Activated CD4-positive, alpha-beta T cell treated with anti-CD3 and anti-CD28 coated beads, Interleukin-2, amount 10 ng/mL, durations not matched to agents 24 days and 14 days (primary cell): ENCODE measurements at regions of chr4 and their contacts with region 1.

Region 1: DNA sequence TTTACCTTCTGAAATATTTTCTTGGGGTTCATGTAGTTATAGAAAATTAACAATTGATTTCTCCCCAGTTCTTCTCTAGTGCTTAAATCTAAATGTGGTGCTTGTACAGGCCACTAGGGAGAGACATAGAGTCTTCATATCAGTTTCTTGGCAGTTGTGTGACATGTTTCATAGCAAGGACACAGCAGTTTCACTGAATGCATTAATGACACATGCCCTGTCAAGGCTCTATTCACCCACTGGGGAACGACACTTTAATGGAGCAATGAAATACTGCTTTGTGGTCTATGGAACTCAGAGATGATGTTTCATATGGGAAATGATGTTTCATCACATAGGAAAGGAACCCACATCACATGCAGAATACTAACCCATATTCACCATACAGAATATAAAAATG is 2.8 kb downstream of the VEGFC start:
- DNase-seq: peak; percentile 59
- H3K4me3 Mint-ChIP-seq: no peak overlapping the region
- H3K27ac Mint-ChIP-seq: no peak overlapping the region
- H3K4me1 Mint-ChIP-seq: peaks cover 3% of the 10 kb centered on the region
- H3K27me3 Mint-ChIP-seq: peaks cover 42% of the 10 kb centered on the region

Region 2: GRCh38 chr4:176377780-176378179 is 412.2 kb before region 1 on chr4:
- intact Hi-C with region 1: loop called (anchors 2 kb)
- DNase-seq: no peak
- H3K4me3 Mint-ChIP-seq: no peak overlapping the region
- H3K27ac Mint-ChIP-seq: no peak overlapping the region
- H3K4me1 Mint-ChIP-seq: no peaks in the 10 kb centered on the region
- H3K27me3 Mint-ChIP-seq: peaks cover 19% of the 10 kb centered on the region

Region 3: DNA sequence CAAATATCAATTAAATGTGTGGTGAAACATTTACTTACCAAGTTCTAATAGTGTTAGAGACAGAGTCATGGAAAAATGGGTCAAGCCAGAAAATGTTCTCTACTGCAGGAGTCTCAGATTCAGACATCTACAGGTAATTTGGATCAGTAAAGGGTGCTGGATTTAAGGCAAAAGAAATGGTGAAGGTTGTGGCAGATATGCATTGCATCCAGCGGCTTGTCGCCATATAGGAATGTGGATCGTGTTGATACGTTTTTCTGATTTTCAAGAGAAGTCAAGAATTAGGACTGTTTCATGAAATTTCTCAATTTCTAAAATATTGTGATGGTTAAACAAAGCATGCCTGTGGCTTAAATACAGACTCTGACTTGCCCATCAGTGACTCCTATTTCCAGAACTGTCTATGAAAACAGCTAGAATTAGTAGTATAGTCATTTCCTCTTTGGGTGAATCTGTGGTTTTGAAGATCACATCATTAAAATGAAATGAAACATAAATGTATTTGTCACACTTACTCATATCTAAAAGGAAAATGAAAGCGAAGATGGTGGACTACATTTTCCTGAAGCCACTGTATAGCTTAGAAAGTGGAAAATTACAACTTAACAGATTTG is 112.9 kb after region 1 on chr4:
- intact Hi-C with region 1: loop called (anchors 5 kb)
- DNase-seq: peak; percentile 60
- H3K4me3 Mint-ChIP-seq: peak overlapping the region; percentile 34
- H3K27ac Mint-ChIP-seq: peak overlapping the region; percentile 49
- H3K4me1 Mint-ChIP-seq: peaks cover 10% of the 10 kb centered on the region
- H3K27me3 Mint-ChIP-seq: peaks cover 8% of the 10 kb centered on the region

Region 4: GRCh38 chr4:177047070-177047850 is 257.3 kb after region 1 on chr4:
- intact Hi-C with region 1: loop called (anchors 1 kb)
- DNase-seq: peak; percentile 86
- H3K4me3 Mint-ChIP-seq: no peak overlapping the region
- H3K27ac Mint-ChIP-seq: no peak overlapping the region
- H3K4me1 Mint-ChIP-seq: no peaks in the 10 kb centered on the region
- H3K27me3 Mint-ChIP-seq: peaks cover 6% of the 10 kb centered on the region

Region 5: GRCh38 chr4:177118596-177118995 is 328.6 kb after region 1 on chr4:
- intact Hi-C with region 1: no loop called
- DNase-seq: no peak
- H3K4me3 Mint-ChIP-seq: no peak overlapping the region
- H3K27ac Mint-ChIP-seq: no peak overlapping the region
- H3K4me1 Mint-ChIP-seq: no peaks in the 10 kb centered on the region
- H3K27me3 Mint-ChIP-seq: no peaks in the 10 kb centered on the region

Region 6: DNA sequence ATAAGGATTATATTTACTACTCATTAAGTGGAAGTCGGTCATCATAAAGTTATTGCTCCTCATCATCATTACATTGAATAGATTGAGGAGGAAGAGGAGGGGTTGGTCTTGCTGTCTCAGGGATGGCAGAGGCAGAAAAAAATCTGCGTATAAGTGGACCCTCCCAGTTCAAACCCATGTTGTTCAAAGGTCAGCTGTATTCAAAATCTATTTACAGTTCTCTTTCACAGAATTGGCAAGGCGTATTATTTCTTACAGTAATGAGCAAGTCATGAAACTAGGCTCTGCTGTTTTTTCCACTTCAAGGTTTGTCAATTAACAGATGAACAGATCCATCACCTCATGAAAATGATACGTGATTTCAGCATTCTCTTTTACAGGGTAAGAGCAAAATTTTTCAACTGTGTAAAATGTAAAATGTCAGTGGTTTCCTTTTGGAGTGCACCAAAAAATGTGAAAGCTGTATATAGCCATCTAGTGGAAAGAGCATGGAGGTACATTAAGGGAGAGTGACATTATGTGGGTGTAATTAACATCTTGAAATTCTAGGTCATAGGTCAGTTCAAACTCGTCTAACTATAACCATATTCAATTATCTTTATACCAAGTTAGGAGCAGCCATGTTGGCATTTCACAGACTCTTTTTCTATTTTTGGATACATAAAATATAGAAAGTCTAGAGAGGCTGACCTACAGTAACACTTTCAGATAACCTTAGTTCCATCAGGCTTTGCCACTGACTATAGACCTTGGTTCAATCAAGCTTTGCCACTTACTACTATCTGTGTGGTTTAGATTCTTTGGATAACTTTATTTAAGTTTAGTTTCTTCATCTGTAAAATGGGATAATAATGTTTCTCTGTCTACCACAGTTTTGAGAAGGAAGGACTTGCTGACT is 549.8 kb after region 1 on chr4:
- intact Hi-C with region 1: loop called (anchors 2 kb)
- DNase-seq: peak; percentile 62
- H3K4me3 Mint-ChIP-seq: no peak overlapping the region
- H3K27ac Mint-ChIP-seq: peak overlapping the region; percentile 67
- H3K4me1 Mint-ChIP-seq: peaks cover 16% of the 10 kb centered on the region
- H3K27me3 Mint-ChIP-seq: no peaks in the 10 kb centered on the region